ENCODE measurements at regions of chr17 and their contacts with region 1.

Region 1: GRCh38 chr17:4796553-4796921 is 573 bp downstream of the PSMB6 start:
- H3K4me3 ChIP-seq: peak overlapping the region; percentile 97
- H3K27ac ChIP-seq: peak overlapping the region; percentile 72
- H3K4me1 ChIP-seq: 0 out of 2 replicates have a peak, but pooled peaks cover 2% of the 10 kb centered on the region
- CTCF ChIP-seq: no peak

Region 2: DNA sequence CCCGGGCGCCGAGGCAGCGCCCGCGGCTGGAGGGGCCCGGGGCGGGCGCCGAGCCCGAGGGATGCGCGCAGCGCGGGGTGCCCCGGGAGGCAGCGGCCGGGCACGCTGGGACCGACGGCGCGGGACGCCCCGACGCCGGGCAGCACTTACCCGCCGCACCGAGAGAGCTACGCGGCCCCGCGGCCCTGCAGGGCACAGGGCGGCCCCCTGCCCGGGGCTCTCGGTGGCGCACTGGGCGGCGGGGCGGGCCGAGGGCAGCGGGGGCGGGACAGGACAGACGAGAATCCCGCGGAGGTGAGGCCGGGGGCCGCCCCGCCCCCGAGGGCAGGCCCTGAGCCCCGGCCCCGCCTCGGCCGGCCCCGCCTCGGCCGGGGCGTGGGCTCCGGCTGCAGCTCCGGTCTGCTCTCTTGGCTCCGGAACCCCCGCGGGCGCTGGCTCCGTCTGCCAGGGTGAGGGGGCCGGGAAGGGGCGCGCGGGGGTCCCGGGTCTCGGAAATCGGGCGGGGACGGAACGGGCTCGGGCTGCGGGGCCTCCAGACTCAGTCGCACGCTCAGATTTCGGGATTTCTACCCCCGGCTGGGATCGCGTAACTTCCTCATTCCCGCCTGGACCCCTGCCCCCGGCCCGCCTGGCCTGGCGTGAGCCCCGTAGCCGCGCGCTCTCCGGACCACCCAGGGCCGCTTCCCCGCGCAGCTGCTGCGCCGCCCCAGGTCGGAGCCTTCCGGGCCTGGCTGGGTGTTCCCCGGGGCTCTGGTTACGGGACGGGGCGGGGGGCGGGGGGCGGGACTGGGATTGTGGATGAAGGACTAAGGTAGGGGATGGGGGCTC is 10.5 kb after region 1 on chr17 and contains the start of gene PLD2:
- CTCF ChIA-PET with region 1: interaction called, 5 read pairs
- POLR2A ChIA-PET with region 1: interaction called, 41 read pairs
- H3K4me3 ChIP-seq: peak within 1 kb of the TSS; percentile 69
- H3K27ac ChIP-seq: peak within 1 kb of the TSS; percentile 64; the same call in 1 of the 2 replicates
- H3K4me1 ChIP-seq: no peaks in the 10 kb centered on the region
- CTCF ChIP-seq: no peak

Measured in HEK293 (cell line).